ENCODE measurements at regions of chr11 and their contacts with region 1.

Region 1: GRCh38 chr11:63906585-63906984 is 10.4 kb downstream of the RCOR2 start:
- DNase-seq: no peak
- H3K4me3 ChIP-seq: no peak overlapping the region
- H3K27ac ChIP-seq: no peak overlapping the region
- H3K4me1 ChIP-seq: no peaks in the 10 kb centered on the region
- H3K27me3 ChIP-seq: no peaks in the 10 kb centered on the region
- CTCF ChIP-seq: peak in 1 of 2 donors; percentile 20
- POLR2A ChIP-seq: no peak

Region 2: DNA sequence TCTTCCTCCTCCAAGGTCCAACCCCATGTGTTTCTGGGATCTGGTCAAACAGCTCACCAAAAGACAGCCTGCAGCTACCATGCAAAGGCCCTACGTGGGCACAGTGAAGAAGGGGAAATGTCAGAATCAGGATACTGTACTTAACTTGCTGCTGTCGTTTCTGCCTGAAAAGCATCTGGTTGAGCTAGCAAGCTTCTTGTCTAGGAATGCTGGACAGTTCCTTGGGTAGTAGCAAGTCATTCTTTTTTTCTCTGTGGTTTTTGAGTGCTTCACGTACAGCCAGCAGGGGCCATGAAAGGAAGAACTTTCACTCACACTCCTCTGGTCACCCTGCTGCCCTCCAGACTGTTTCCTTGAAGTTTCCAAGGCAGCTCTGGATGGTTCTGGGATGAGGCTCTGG is 14.4 kb before region 1 on chr11:
- CTCF ChIA-PET with region 1: interaction called, 10 read pairs
- POLR2A ChIA-PET with region 1: interaction called, 7 read pairs
- dilution Hi-C with region 1: no loop called
- intact Hi-C with region 1: no loop called
- DNase-seq: no peak
- H3K4me3 ChIP-seq: no peak overlapping the region
- H3K27ac ChIP-seq: no peak overlapping the region
- H3K4me1 ChIP-seq: peaks cover 12% of the 10 kb centered on the region
- H3K27me3 ChIP-seq: no peaks in the 10 kb centered on the region
- CTCF ChIP-seq: no peak
- POLR2A ChIP-seq: no peak